HEK293 (cell line): ENCODE measurements at regions of chr6 and their contacts with region 1.

Region 1: DNA sequence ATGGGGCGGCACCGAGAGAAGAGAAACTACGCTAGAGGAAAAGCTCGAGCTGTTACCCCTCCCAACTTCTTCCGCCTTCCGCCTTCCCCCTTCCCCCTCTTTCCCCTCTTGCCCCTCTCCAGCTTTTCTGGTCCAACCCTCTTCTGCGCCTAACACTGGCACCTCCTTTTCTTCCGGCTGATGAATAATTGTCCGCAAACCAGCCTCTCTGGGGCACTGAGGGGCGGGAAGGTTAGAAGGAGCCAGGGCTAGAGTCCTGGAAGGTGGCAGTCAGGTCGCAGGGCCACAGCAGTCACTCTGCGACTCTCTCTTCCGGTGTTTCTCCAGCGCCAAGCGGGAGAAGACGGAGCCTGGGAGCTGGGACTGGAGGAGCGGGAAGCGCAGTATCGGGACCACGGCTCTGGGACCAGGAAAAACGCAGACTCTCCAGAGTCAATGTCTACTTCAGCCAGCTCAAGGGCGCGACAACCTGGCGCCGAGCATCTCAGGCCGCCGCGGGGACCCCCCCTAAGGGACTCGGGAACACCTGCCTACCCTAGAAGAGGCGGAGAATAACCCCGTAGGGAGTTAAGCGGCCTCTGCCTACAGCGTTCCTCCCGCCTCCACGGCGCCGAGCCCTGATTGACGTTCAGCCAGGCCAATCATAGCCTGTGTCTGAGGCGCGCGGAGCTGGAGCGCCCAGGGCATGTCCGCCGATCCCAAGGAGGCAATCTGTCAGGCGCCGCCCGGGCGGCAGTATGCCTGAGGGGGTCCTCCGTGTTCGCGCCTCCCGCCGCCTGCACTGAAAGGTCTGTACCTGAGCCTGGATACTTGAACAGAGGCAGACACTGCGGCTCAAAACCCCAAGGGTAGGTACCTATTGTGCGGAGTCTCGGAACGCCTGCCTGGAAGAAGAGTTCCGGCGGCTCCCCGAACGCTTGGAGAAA is 40.4 kb downstream of the PSMB9 start:
- H3K4me3 ChIP-seq: peak overlapping the region; percentile 66
- H3K27ac ChIP-seq: peak overlapping the region; percentile 96
- H3K4me1 ChIP-seq: peaks cover 5% of the 10 kb centered on the region
- CTCF ChIP-seq: peak; percentile 52; the same call in 1 of the 2 replicates

Region 2: DNA sequence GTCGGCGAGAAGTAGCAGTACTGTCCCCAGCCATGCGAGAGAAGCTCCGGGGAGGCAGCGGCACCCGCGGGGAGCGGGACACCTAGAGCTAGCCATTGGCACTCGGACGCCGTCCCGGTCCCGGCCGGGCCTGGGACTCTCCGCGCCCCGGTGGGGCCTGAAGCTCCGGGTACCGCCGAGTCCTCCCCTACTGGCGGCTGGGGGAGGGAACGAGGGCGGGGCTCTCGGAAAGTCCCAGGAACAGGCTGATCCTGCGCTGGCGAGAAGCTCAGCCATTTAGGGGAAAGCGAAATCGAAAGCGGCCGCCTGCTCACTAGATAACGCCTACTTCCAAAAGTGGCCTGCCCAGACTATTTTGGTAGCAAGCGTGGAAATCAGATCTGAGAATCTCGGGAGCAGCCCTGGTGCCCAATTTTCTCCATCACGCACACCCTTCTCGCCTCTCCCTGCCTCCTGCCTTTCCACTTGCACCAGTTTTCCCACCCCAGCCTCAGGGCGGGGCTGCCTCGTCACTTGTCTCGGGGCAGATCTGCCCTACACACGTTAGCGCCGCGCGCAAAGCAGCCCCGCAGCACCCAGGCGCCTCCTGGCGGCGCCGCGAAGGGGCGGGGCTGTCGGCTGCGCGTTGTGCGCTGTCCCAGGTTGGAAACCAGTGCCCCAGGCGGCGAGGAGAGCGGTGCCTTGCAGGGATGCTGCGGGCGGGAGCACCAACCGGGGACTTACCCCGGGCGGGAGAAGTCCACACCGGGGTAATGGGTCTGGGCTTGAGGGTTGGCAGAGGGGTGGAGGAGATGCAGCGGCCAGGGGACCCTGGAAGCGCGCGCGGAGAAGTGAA is 40.6 kb before region 1 on chr6 and contains the starts of genes PSMB9 and TAP1:
- CTCF ChIA-PET with region 1: no interaction called
- POLR2A ChIA-PET with region 1: interaction called, 11 read pairs
- H3K4me3 ChIP-seq: peak within 1 kb of the TSS; percentile 85
- H3K27ac ChIP-seq: peak within 1 kb of the TSS; percentile 71
- H3K4me1 ChIP-seq: no peaks in the 10 kb centered on the region; the same call in 1 of the 2 replicates
- CTCF ChIP-seq: peak; percentile 98

Region 3: GRCh38 chr6:32906539-32906938 is 12.2 kb after region 1 on chr6:
- CTCF ChIA-PET with region 1: interaction called, 4 read pairs
- POLR2A ChIA-PET with region 1: interaction called, 34 read pairs
- H3K4me3 ChIP-seq: no peak overlapping the region
- H3K27ac ChIP-seq: no peak overlapping the region
- H3K4me1 ChIP-seq: peaks cover 11% of the 10 kb centered on the region
- CTCF ChIP-seq: no peak

Region 4: DNA sequence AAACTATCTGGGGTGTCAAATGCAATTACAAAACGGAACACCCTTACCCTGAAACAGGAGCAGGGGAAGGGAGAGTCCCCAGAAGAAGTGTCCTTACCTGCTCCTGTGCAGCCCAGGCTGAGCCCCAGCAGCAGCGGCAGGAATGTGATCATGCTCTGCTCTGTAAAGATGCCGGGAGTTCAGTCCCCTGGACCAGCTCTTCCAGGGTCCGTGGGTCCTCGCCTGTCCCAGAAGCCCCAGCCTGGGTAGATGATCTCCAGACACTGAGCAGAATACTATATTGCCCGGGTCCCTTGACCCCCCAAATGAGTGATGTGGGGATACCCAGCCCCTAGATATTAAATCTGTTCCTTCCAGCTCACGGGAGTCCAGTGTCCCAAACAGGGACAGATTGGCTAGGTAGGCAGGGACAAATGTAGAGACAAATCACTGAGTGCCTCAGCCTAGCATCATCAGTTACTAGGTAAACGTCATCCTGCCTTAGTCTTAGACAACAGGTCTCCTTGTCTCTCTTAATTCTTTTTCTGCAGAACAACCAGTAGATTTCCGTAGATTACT is 46.4 kb after region 1 on chr6 and contains the start of gene HLA-DMB:
- CTCF ChIA-PET with region 1: interaction called, 3 read pairs
- POLR2A ChIA-PET with region 1: interaction called, 22 read pairs
- H3K4me3 ChIP-seq: peak within 1 kb of the TSS; percentile 57
- H3K27ac ChIP-seq: no peak within 1 kb of the TSS
- H3K4me1 ChIP-seq: no peaks in the 10 kb centered on the region
- CTCF ChIP-seq: no peak

Region 5: GRCh38 chr6:33375143-33375671 is 480.9 kb after region 1 on chr6:
- CTCF ChIA-PET with region 1: no interaction called
- POLR2A ChIA-PET with region 1: no interaction called
- H3K4me3 ChIP-seq: no peak overlapping the region
- H3K27ac ChIP-seq: no peak overlapping the region
- H3K4me1 ChIP-seq: peaks cover 19% of the 10 kb centered on the region
- CTCF ChIP-seq: no peak